ENCODE measurements at regions of chr1 and their contacts with region 1.

Region 1: GRCh38 chr1:58903514-58904298 is 119.9 kb upstream of the JUN start:
- DNase-seq: peak; percentile 33 to 83 (median 69)
- ATAC-seq: peak; percentile 86
- H3K4me3 ChIP-seq: peak overlapping the region; percentile 47 to 53
- H3K4me3 Mint-ChIP-seq: peak overlapping the region; percentile 82
- H3K27ac ChIP-seq: peak overlapping the region; percentile 34 to 76
- H3K27ac Mint-ChIP-seq: peak overlapping the region; percentile 84
- H3K4me1 ChIP-seq: peaks cover 11% of the 10 kb centered on the region
- H3K4me1 Mint-ChIP-seq: peaks cover 18% of the 10 kb centered on the region
- H3K27me3 ChIP-seq: no peaks in the 10 kb centered on the region
- H3K27me3 Mint-ChIP-seq: no peaks in the 10 kb centered on the region
- CTCF ChIP-seq: no peak

Region 2: DNA sequence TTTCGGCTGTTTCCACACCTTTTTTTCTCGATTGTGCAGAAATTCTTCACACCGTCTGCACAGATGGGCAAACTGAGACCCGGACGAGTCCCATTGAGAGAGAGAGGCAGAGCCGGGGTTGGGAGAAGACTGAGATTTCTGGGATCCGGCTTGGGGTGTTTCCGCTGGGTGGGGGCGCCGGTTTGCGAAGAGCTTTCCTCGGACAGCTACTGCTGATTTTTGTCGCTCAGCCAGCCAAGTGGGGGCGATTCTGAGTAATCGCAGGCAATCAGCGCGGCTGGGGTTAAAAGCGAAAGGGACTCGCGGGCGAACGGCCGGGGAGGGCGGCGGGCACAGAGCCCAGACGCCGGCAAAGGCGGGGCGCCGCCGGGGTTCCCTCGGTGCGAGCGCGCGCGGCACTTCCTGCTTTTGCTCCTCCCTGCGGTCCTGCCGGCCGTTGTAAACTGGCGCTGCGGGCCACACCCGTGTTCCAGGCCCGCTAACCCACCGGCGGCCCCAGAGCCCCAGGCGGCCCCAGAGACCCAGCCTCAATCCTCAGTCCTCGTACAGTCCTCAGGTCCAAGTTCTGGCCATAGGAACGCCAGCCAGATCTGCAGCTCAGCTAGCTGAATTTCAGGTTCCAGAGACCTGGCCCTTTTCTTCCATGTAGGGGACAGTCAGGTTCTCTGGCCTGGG is 87.5 kb before region 1 on chr1:
- CTCF ChIA-PET with region 1: no interaction called
- POLR2A ChIA-PET with region 1: no interaction called
- intact Hi-C with region 1: loop called in 1 of 2 experiments (anchors 2 kb)
- DNase-seq: peak; percentile 61 to 90 (median 81)
- ATAC-seq: peak; percentile 71
- H3K4me3 ChIP-seq: peak overlapping the region; percentile 84 to 92
- H3K4me3 Mint-ChIP-seq: peak overlapping the region; percentile 91
- H3K27ac ChIP-seq: peak overlapping the region; percentile 67 to 87
- H3K27ac Mint-ChIP-seq: peak overlapping the region; percentile 91
- H3K4me1 ChIP-seq: peaks cover 36% of the 10 kb centered on the region
- H3K4me1 Mint-ChIP-seq: peaks cover 46% of the 10 kb centered on the region
- H3K27me3 ChIP-seq: no peaks in the 10 kb centered on the region
- H3K27me3 Mint-ChIP-seq: no peaks in the 10 kb centered on the region
- CTCF ChIP-seq: no peak